GM12878 (cell line): ENCODE measurements at regions of chr17 and their contacts with region 1.

Region 1: DNA sequence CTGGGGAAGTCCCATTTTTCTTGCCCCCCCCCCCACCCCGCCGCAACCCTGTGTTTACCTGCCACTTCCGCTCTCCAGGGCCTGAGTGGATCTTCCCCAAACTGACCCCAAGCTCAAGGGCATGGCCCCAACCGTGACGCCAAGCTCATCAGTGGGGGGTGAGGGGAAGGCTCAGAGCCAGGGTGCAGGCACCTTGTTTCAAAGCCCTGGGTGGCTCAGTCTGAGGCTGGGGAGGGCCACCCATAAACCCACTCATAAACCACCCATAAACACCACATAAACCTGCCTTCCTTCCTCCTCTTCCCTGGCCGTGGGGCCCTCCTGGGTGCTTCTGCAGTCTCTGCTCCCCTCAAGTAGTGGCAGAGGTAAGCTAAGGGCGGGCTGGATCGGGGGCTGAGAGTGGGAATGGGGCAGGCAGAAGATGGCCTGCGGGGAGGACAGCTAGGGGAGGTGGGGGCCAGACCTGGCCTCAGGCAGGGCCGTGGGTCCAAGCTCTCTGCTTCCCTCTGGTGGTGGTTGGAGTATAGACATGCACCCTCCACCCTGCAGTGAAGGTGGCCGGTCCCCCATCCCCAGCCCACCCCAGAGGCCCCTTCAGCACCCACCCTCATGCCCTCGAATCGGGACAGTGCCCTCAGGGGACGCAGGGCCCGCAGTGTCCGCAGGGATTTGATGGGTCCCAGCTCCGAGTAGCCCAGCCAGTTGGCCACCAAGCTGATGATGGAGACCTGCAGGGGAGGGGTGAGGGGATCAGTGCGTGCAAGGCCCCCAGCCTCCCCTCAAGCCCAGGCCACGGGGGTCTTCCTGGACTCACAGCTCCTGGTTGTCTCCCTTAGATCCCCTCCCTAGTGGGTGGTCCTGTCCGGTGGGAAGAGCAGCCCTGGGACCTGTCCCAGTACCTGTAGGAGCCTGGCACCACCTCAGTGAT is 14.6 kb upstream of the CD79B start:
- DNase-seq: no peak
- ATAC-seq: peak; percentile 92
- H3K4me3 ChIP-seq: peak overlapping the region; percentile 39; the same call in 1 of the 2 replicates
- H3K27ac ChIP-seq: peak overlapping the region; percentile 86
- H3K4me1 ChIP-seq: peaks cover 18% of the 10 kb centered on the region
- H3K27me3 ChIP-seq: no peaks in the 10 kb centered on the region
- CTCF ChIP-seq: peak; percentile 65 to 85 (median 78)
- EP300 ChIP-seq: no peak
- POLR2A ChIP-seq: 0 out of 2 replicates have a peak, but pooled peaks have one; percentile 49
- RAD21 ChIP-seq: peak; percentile 65

Region 2: GRCh38 chr17:63827002-63827771 is 119.5 kb before region 1 on chr17 and contains the starts of genes FTSJ3 and PSMC5:
- CTCF ChIA-PET with region 1: no interaction called
- POLR2A ChIA-PET with region 1: no interaction called
- RAD21 ChIA-PET with region 1: no interaction called
- SMC1A ChIA-PET with region 1: no interaction called
- in situ Hi-C with region 1: no loop called
- intact Hi-C with region 1: no loop called
- DNase-seq: peak; percentile 84
- ATAC-seq: peak; percentile 95
- H3K4me3 ChIP-seq: peak within 1 kb of the TSS; percentile 83
- H3K27ac ChIP-seq: peak within 1 kb of the TSS; percentile 95
- H3K4me1 ChIP-seq: peaks cover 17% of the 10 kb centered on the region
- H3K27me3 ChIP-seq: no peaks in the 10 kb centered on the region
- CTCF ChIP-seq: peak; percentile 60 to 73 (median 61)
- EP300 ChIP-seq: no peak
- POLR2A ChIP-seq: peak; percentile 99
- RAD21 ChIP-seq: no peak
- polyA plus RNA-seq, gene FTSJ3: 17.2 to 34.2 TPM
- polyA plus RNA-seq, gene PSMC5: 115 to 266 TPM

Region 3: GRCh38 chr17:63904316-63904715 is 42.4 kb before region 1 on chr17:
- CTCF ChIA-PET with region 1: interaction called, 23 read pairs
- POLR2A ChIA-PET with region 1: no interaction called
- RAD21 ChIA-PET with region 1: interaction called, 6 read pairs
- SMC1A ChIA-PET with region 1: interaction called, 9 read pairs
- in situ Hi-C with region 1: no loop called
- intact Hi-C with region 1: no loop called
- DNase-seq: no peak
- ATAC-seq: no peak
- H3K4me3 ChIP-seq: no peak overlapping the region
- H3K27ac ChIP-seq: no peak overlapping the region
- H3K4me1 ChIP-seq: no peaks in the 10 kb centered on the region
- H3K27me3 ChIP-seq: no peaks in the 10 kb centered on the region
- CTCF ChIP-seq: no peak
- EP300 ChIP-seq: no peak
- POLR2A ChIP-seq: no peak
- RAD21 ChIP-seq: no peak

Region 4: DNA sequence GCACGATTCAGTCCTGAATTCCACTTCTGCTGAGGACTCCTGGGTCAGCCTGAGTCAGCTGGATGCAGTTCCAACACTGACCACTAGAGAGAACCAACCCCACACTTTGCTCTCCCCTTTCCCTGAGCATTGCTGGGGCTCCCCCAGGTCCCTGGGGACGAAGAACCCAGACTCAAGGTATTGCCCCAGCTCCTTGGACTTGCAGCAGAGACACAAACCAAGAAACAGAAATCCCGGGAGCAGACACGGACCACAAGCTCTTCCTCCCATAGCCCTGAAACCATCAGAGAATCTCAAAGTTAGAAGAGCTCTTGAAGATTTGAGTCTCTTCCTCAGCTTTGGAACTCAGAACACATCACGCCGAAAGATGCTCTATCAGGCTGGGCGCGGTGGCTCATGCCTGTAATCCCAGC is 27.4 kb before region 1 on chr17:
- CTCF ChIA-PET with region 1: interaction called, 481 read pairs
- POLR2A ChIA-PET with region 1: interaction called, 25 read pairs
- RAD21 ChIA-PET with region 1: interaction called, 288 read pairs
- SMC1A ChIA-PET with region 1: interaction called, 248 read pairs
- in situ Hi-C with region 1: no loop called
- intact Hi-C with region 1: loop called (anchors 1 kb)
- DNase-seq: peak; percentile 71
- ATAC-seq: peak; percentile 83
- H3K4me3 ChIP-seq: no peak overlapping the region
- H3K27ac ChIP-seq: no peak overlapping the region
- H3K4me1 ChIP-seq: peaks cover 16% of the 10 kb centered on the region
- H3K27me3 ChIP-seq: no peaks in the 10 kb centered on the region
- CTCF ChIP-seq: peak; percentile 92 to 97 (median 94)
- EP300 ChIP-seq: no peak
- POLR2A ChIP-seq: no peak
- RAD21 ChIP-seq: peak; percentile 97

Region 5: GRCh38 chr17:63931099-63931561 is 15.6 kb before region 1 on chr17:
- CTCF ChIA-PET with region 1: interaction called, 481 read pairs
- POLR2A ChIA-PET with region 1: interaction called, 68 read pairs
- RAD21 ChIA-PET with region 1: interaction called, 130 read pairs
- SMC1A ChIA-PET with region 1: interaction called, 248 read pairs
- in situ Hi-C with region 1: no loop called
- intact Hi-C with region 1: no loop called
- DNase-seq: no peak
- ATAC-seq: peak; percentile 80
- H3K4me3 ChIP-seq: peak overlapping the region; percentile 98
- H3K27ac ChIP-seq: peak overlapping the region; percentile 89
- H3K4me1 ChIP-seq: peaks cover 46% of the 10 kb centered on the region
- H3K27me3 ChIP-seq: no peaks in the 10 kb centered on the region
- CTCF ChIP-seq: no peak
- EP300 ChIP-seq: no peak
- POLR2A ChIP-seq: no peak
- RAD21 ChIP-seq: no peak

Region 6: GRCh38 chr17:63993368-63993985 is 46.8 kb after region 1 on chr17:
- CTCF ChIA-PET with region 1: interaction called, 26 read pairs
- POLR2A ChIA-PET with region 1: no interaction called
- RAD21 ChIA-PET with region 1: interaction called, 9 read pairs
- SMC1A ChIA-PET with region 1: interaction called, 12 read pairs
- in situ Hi-C with region 1: no loop called
- intact Hi-C with region 1: no loop called
- DNase-seq: no peak
- ATAC-seq: no peak
- H3K4me3 ChIP-seq: no peak overlapping the region
- H3K27ac ChIP-seq: no peak overlapping the region
- H3K4me1 ChIP-seq: peaks cover 4% of the 10 kb centered on the region
- H3K27me3 ChIP-seq: peaks cover 3 to 7% of the 10 kb centered on the region in 2 experiments
- CTCF ChIP-seq: no peak
- EP300 ChIP-seq: no peak
- POLR2A ChIP-seq: no peak
- RAD21 ChIP-seq: no peak

Region 7: DNA sequence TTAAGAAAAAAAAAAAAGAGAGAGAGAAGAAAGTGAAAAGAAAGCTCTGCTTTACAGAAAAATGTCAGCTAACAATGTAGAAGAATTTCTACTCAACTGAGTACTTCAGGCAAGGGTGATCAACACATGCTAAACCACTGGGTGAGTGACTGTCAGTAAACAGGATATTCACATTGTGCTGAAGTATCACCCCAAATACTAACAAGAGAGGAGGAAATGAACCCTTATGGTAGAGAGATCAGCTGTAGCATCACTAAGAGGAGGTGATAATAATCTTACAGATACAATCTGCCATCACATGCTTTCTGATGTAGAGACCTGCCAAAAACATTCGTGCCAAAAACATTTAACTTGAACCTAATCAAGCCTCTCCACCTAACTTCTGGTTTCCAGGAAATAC is 104.4 kb after region 1 on chr17:
- CTCF ChIA-PET with region 1: no interaction called
- POLR2A ChIA-PET with region 1: no interaction called
- RAD21 ChIA-PET with region 1: no interaction called
- SMC1A ChIA-PET with region 1: no interaction called
- in situ Hi-C with region 1: no loop called
- intact Hi-C with region 1: no loop called
- DNase-seq: no peak
- ATAC-seq: no peak
- H3K4me3 ChIP-seq: no peak overlapping the region
- H3K27ac ChIP-seq: no peak overlapping the region
- H3K4me1 ChIP-seq: peaks cover 5% of the 10 kb centered on the region
- H3K27me3 ChIP-seq: no peaks in the 10 kb centered on the region
- CTCF ChIP-seq: no peak
- EP300 ChIP-seq: no peak
- POLR2A ChIP-seq: no peak
- RAD21 ChIP-seq: no peak